CD4-positive, alpha-beta memory T cell (primary cell): ENCODE measurements at regions of chr5 and their contacts with region 1.

Region 1: GRCh38 chr5:73215891-73216610 is 43.1 kb downstream of the TMEM174 start:
- DNase-seq: peak; percentile 53 to 59 (median 57)
- H3K4me3 ChIP-seq: peak overlapping the region in 1 of 2 donors; percentile 28
- H3K4me3 Mint-ChIP-seq: peak overlapping the region in 7 of 8 donors; percentile 19 to 69 (median 56)
- H3K27ac ChIP-seq: no peak overlapping the region
- H3K27ac Mint-ChIP-seq: no peak overlapping the region
- H3K4me1 ChIP-seq: peaks cover 11% of the 10 kb centered on the region
- H3K4me1 Mint-ChIP-seq: peaks cover 6 to 10% (median 7%) of the 10 kb centered on the region in 4 donors
- H3K27me3 ChIP-seq: peaks cover 28% of the 10 kb centered on the region
- H3K27me3 Mint-ChIP-seq: peaks cover 47 to 50% of the 10 kb centered on the region in 2 donors

Region 2: DNA sequence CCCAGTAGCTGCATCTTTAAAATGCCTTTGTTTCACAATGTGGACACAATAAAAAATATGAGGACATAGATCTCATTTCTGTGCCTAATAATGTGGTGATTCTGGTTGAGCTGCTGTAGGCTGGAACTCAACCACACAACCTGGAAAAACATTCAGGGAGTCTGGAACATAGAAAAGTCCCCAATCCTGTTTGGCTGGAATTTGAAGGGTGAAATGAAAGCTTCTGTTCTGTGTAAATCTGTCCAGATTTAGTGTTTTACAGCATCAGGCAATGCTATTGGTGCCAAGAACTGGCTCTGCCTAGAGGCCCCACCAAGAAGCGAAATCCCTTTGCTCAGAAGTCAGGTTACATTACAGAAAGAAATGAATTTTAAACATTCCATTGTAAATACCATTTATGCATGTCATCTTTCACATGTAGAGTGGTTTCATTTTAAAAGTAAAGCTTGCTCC is 13.2 kb after region 1 on chr5:
- CTCF ChIA-PET with region 1: interaction called, 34 read pairs
- POLR2A ChIA-PET with region 1: no interaction called
- intact Hi-C with region 1: no loop called
- DNase-seq: no peak
- H3K4me3 ChIP-seq: no peak overlapping the region
- H3K4me3 Mint-ChIP-seq: no peak overlapping the region
- H3K27ac ChIP-seq: no peak overlapping the region
- H3K27ac Mint-ChIP-seq: no peak overlapping the region
- H3K4me1 ChIP-seq: peaks cover 23% of the 10 kb centered on the region
- H3K4me1 Mint-ChIP-seq: peaks cover 10 to 30% (median 22%) of the 10 kb centered on the region in 4 donors
- H3K27me3 ChIP-seq: peaks cover 45% of the 10 kb centered on the region
- H3K27me3 Mint-ChIP-seq: peaks cover 53 to 67% of the 10 kb centered on the region in 2 donors